ENCODE measurements at regions of chr2 and their contacts with region 1.

Region 1: DNA sequence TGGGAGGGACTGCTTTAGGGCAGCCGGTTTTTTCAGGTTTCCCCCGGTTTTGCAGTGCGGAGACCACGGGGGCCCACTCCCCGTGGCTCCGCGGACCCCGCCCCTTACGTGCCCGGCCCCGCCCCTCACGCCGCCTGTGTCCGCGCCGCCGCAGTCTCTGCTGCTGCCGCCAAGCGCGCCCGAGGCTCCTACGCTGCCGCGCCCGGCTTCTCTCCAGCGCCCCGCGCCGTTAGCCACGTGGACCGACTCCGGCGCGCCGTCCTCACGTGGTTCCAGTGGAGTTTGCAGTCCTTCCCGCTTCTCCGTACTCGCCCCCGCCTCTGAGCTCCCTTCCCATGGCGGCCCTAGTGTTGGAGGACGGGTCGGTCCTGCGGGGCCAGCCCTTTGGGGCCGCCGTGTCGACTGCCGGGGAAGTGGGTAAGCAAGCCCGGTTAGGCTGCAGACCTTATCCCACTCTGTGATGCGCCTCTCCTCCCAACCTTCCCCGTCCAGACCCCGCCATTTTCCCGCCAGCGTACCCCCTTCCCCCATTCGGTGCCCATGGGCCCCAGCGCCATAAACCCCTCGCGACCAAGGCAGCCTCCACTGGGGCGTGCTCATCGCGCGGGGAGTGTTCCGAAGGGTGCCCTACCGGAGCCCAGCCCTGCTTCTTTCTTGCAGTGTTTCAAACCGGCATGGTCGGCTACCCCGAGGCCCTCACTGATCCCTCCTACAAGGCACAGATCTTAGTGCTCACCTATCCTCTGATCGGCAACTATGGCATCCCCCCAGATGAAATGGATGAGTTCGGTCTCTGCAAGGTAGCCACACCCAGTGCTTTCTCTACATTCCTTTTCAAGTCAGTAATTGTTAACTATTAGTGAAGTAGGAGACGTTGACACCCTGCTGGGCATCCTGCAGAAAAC is at the start of gene CAD:
- DNase-seq: peak; percentile 72 to 85 (median 80)
- H3K4me3 ChIP-seq: peak within 1 kb of the TSS; percentile 65 to 86 (median 79)
- H3K4me3 Mint-ChIP-seq: peak within 1 kb of the TSS; percentile 89 to 93
- H3K27ac ChIP-seq: peak within 1 kb of the TSS; percentile 46 to 60
- H3K27ac Mint-ChIP-seq: peak within 1 kb of the TSS; percentile 79 to 94 (median 87)
- H3K4me1 ChIP-seq: peaks cover 20 to 30% of the 10 kb centered on the region in 2 donors
- H3K4me1 Mint-ChIP-seq: peaks cover 27% of the 10 kb centered on the region
- H3K27me3 ChIP-seq: no peaks in the 10 kb centered on the region
- H3K27me3 Mint-ChIP-seq: peaks cover 0 to 1% (median 1%) of the 10 kb centered on the region in 3 donors
- CTCF ChIP-seq: no peak
- polyA plus RNA-seq, gene CAD: 0.71 to 17.3 (median 1.7) TPM

Region 2: GRCh38 chr2:27133905-27134780 is 83.3 kb before region 1 on chr2 and contains the start of gene PREB:
- intact Hi-C with region 1: loop called (anchors 1 to 2 kb)
- DNase-seq: peak; percentile 94 to 97 (median 96)
- H3K4me3 ChIP-seq: peak within 1 kb of the TSS; percentile 77 to 98 (median 81)
- H3K4me3 Mint-ChIP-seq: peak within 1 kb of the TSS; percentile 88 to 95
- H3K27ac ChIP-seq: peak within 1 kb of the TSS; percentile 34 to 95
- H3K27ac Mint-ChIP-seq: peak within 1 kb of the TSS; percentile 89 to 96 (median 95)
- H3K4me1 ChIP-seq: peaks cover 19% of the 10 kb centered on the region in 2 donors
- H3K4me1 Mint-ChIP-seq: peaks cover 18% of the 10 kb centered on the region
- H3K27me3 ChIP-seq: no peaks in the 10 kb centered on the region
- H3K27me3 Mint-ChIP-seq: peaks cover 0 to 9% (median 4%) of the 10 kb centered on the region in 3 donors
- CTCF ChIP-seq: peak; percentile 32
- polyA plus RNA-seq, gene PREB: 70.0 to 78.2 (median 71.7) TPM

Region 3: GRCh38 chr2:27303093-27304025 is 85.9 kb after region 1 on chr2:
- intact Hi-C with region 1: no loop called
- DNase-seq: peak; percentile 38 to 74 (median 66)
- H3K4me3 ChIP-seq: peak overlapping the region; percentile 23 to 67 (median 28)
- H3K4me3 Mint-ChIP-seq: peak overlapping the region; percentile 74 to 87
- H3K27ac ChIP-seq: no peak overlapping the region
- H3K27ac Mint-ChIP-seq: peak overlapping the region in 4 of 7 donors; percentile 40 to 64 (median 42)
- H3K4me1 ChIP-seq: peaks cover 12 to 14% of the 10 kb centered on the region in 2 donors
- H3K4me1 Mint-ChIP-seq: peaks cover 17% of the 10 kb centered on the region
- H3K27me3 ChIP-seq: peaks cover 4 to 32% of the 10 kb centered on the region in 2 donors
- H3K27me3 Mint-ChIP-seq: peaks cover 37 to 47% (median 46%) of the 10 kb centered on the region in 3 donors
- CTCF ChIP-seq: peak; percentile 95

Measured in CD14-positive monocyte (primary cell).